Left ventricle myocardium superior (tissue), 1 donor: ENCODE measurements at regions of chrX and their contacts with region 1.

Region 1: DNA sequence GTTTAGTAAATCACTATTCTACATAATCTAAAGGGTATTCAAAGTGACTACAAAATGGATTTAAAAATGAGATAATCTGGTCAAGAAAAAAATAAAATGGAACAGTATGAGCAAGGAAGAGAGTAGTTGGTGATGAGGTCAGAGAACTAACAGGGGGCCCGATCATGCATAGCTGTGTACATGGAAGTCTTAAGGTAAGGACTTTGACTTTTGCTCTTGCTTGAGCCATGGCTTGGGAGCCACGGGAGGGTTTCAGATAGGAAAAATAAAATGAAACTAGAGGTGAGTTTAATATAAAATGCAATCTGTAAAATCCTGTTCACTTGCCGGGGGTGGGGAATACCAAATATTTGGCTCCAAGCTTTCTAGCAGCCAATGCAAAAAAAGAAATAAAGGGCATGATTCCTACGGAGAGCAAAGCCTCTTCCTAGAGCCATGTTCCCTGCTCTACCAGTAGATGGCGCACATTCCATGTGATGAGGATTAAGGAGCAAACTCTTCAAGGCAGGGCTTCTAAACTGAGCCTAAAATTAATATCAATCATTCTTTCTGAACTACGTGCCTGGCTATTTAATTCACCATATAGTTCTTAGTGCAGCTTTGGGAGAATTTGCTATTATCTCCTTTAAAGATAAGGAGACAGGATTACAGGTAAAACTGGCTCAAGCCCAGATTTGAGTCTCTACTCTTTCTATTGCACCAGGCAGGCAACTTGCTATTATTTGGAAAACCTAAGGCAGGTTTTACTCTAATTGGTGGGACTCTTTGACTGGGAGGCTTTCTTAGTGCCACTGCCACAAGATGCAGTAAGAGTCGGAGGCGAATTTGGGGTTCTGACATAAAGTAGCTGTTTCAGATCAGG is 6.8 kb upstream of the CLCN5 start:
- DNase-seq: no peak
- ATAC-seq: peak; percentile 68

Region 2: DNA sequence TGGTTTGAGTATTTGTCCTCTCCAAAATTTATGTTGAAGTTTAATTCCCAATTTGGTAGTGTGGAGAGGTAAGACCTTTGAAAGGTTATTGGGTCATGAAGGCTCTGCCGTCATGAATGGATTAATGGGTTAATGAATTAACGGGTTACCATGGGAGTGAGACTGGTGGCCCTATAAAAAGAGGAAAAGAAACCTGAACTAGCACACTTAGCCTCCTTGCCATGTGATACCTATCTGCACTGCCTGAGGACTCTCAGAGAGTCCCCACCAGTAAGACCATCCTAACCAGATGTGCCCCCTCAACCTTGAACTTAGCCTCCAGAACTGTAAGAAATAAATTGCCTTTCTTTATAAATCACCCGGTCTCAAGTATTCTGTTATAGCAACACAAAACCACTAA is 259.1 kb before region 1 on chrX:
- intact Hi-C with region 1: no loop called
- DNase-seq: no peak
- ATAC-seq: no peak

Region 3: DNA sequence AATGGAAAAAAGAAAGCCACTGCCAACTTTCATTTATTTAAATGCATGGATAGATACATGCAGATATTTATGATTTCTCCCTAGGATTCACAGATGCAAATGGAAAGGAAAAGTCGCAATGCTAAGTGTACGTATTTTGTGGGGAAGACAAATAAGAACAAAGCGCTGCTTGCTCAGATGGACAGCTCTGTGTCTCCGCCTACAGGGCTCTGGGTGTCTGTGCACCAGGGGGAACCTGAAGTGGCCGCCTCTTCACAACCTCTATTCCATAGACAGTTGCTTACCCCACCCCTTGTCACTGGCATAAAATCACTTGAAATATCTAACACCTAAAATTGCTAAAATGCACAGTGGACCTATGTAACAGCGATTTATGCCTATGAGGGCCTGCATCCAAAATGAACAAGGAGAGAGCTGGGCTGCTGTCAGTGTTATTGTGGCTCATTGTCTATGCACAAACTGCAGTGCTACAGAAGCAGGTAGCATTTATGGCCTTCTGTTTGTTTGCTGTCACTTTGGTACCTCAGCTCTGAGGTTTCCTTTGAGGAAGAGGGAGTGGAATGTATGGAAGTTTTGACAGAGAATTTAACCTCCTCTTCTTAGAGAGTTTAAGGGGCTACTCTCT is 161.2 kb before region 1 on chrX:
- intact Hi-C with region 1: no loop called
- DNase-seq: peak; percentile 29
- ATAC-seq: no peak

Region 4: GRCh38 chrX:50081282-50081889 is 165.8 kb after region 1 on chrX:
- intact Hi-C with region 1: loop called (anchors 5 kb)
- DNase-seq: peak; percentile 42
- ATAC-seq: peak; percentile 68